ENCODE measurements at regions of chrX and their contacts with region 1.

Region 1: DNA sequence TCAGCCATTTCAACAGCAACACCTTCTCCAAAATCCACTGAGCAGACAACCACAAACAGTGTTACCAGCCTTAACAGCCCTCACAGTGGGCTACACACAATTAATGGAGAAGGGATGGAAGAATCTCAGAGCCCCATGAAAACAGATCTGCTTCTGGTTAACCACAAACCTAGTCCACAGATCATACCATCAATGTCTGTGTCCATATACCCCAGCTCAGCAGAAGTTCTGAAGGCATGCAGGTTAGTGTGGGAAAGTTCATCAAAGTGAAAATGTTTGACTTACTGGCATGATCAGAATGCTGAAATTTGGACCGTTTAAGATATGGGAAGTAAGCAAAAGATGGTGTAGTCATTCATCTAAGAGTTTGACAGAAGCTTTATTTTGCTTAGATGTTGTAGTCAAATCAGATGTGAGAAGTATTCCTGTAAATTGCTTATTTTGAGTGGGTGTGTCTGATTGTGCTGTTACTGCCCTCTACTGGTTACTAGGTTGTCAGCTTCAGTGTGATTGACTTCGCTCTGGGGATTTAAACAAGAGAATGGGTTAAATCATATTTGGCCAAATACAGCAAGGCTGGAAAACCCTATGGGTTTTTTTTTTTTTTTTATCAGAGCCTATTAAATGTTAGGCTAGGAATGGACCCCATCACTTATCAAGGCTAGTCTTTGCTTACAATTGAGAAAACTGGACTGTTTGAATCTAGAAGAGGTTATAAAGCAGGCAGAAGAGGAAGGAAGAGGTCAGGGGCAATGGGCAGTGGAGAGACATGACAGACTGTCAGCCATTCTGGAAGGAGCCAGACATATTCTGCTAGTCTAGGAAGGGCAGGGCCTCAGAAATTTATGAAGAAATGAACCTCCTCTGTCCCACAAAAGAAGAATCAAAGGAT is 130.3 kb downstream of the DIPK2B start:
- DNase-seq: peak; percentile 64
- H3K4me3 Mint-ChIP-seq: no peak overlapping the region
- H3K27ac Mint-ChIP-seq: peak overlapping the region; percentile 70
- H3K4me1 Mint-ChIP-seq: peaks cover 35% of the 10 kb centered on the region
- H3K27me3 Mint-ChIP-seq: no peaks in the 10 kb centered on the region

Region 2: DNA sequence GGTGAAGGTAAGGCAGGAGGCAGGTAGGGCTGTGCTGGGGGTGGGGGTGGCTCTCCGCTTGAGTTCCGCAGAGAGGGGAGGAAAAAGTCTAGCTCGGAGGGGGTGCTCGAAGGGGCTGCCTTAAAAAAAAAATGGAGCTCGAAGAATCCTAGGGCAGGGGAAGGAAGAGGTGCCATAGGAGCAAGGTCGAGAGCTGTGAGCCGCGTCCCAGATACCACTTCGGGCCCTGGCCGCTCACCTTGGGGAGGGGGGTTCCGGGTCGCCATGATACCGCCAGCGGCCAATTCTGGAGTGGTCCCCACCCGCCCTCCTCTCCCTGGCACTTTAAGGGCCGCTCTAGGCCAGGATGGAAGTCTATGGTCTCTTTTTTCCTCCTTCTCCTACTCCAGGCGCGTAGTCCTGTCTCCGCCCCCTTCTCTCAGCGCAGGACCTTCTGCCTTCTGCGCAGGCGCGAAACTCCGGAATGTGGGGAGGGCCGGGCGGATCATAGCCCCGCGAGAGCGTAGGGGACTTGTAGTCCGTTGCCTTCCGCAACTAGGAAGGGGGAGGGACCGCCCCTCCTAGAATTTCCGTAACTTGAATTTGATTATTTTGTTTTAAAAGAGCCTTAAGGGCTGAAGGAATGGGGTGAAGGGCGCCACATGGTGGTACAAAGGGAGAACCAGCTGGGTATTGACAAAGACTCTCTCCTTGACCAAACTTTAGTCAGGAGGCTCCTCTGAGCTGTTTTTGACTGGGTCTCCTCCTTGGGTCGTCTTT is 527.6 kb before region 1 on chrX and contains the start of gene FUNDC1:
- intact Hi-C with region 1: loop called (anchors 10 kb)
- DNase-seq: peak; percentile 96
- H3K4me3 Mint-ChIP-seq: peak within 1 kb of the TSS; percentile 91
- H3K27ac Mint-ChIP-seq: peak within 1 kb of the TSS; percentile 92
- H3K4me1 Mint-ChIP-seq: peaks cover 14% of the 10 kb centered on the region
- H3K27me3 Mint-ChIP-seq: no peaks in the 10 kb centered on the region
- total RNA-seq, gene FUNDC1: 9.5 and 12.2 TPM in 2 replicates

Region 3: DNA sequence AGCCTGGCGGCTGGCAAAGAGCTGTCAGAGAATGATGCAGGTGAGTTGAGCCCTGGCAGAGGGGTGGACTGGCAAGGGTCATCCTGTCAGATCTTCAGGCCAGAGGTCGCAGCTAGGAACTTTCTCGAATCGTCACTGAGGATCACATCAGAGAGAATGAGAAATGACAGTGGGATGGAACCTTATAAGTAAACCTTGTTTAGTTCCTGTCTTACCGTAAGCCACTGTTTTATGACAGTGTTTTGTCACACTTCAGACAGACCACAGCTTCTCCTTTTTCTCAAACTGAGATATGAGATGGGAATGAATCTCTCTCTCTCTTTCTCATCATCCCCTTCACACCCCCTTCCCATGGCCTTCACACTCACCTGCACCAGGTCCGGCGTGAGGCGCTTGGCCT is 121.0 kb after region 1 on chrX:
- intact Hi-C with region 1: loop called (anchors 10 kb)
- DNase-seq: peak; percentile 57
- H3K4me3 Mint-ChIP-seq: peak overlapping the region; percentile 67
- H3K27ac Mint-ChIP-seq: peak overlapping the region; percentile 83
- H3K4me1 Mint-ChIP-seq: peaks cover 26% of the 10 kb centered on the region
- H3K27me3 Mint-ChIP-seq: no peaks in the 10 kb centered on the region

Region 4: GRCh38 chrX:46220822-46221221 is 1150.5 kb after region 1 on chrX:
- intact Hi-C with region 1: no loop called
- DNase-seq: no peak
- H3K4me3 Mint-ChIP-seq: no peak overlapping the region
- H3K27ac Mint-ChIP-seq: no peak overlapping the region
- H3K4me1 Mint-ChIP-seq: no peaks in the 10 kb centered on the region
- H3K27me3 Mint-ChIP-seq: no peaks in the 10 kb centered on the region

Measured in activated CD4-positive, alpha-beta T cell treated with anti-CD3 and anti-CD28 coated beads, Interleukin-2, amount 10 ng/mL, durations not matched to agents 24 days and 14 days (primary cell).